ENCODE measurements at regions of chr15 and their contacts with region 1.

Region 1: GRCh38 chr15:55221090-55222011 is 24.6 kb upstream of the RSL24D1 start:
- DNase-seq: no peak
- ATAC-seq: peak; percentile 67
- H3K4me3 ChIP-seq: no peak overlapping the region
- H3K4me1 ChIP-seq: no peaks in the 10 kb centered on the region
- CTCF ChIP-seq: no peak

Region 2: GRCh38 chr15:55133972-55134371 is 87.4 kb before region 1 on chr15:
- intact Hi-C with region 1: no loop called
- DNase-seq: no peak
- ATAC-seq: no peak
- H3K4me3 ChIP-seq: no peak overlapping the region
- H3K4me1 ChIP-seq: no peaks in the 10 kb centered on the region
- CTCF ChIP-seq: no peak

Region 3: GRCh38 chr15:55290528-55291057 is 69.2 kb after region 1 on chr15:
- intact Hi-C with region 1: loop called (anchors 1 to 5 kb)
- DNase-seq: peak; percentile 89 to 91 (median 90)
- ATAC-seq: peak; percentile 83
- H3K4me3 ChIP-seq: peak overlapping the region; percentile 71
- H3K4me1 ChIP-seq: peaks cover 5% of the 10 kb centered on the region
- CTCF ChIP-seq: peak; percentile 82